ENCODE measurements at regions of chr10 and their contacts with region 1.

Region 1: DNA sequence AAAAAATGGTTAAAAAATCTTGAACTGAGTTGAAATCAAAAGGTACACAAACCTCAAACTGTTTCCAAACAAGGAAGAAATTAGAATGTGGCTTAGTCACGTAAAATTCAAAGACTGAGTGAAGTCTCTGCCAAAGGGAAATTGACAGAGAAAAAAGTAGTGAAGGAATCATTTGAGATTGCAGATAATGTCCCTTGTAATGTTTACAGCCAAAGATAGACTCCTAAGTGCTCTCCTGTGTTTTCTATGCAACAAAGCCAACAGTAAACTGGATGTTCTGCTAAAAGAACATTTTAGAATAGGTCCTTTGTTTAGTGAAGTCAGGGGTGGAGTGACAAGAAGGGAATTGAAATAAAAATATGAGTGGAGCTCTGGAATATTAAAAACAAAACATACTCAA is 117.9 kb downstream of the ITGA8 start:
- DNase-seq: no peak

Region 2: GRCh38 chr10:15670880-15671279 is 69.1 kb after region 1 on chr10:
- intact Hi-C with region 1: loop called in 1 of 2 experiments (anchors 2 kb)
- DNase-seq: no peak

Region 3: GRCh38 chr10:15990523-15991129 is 388.8 kb after region 1 on chr10:
- intact Hi-C with region 1: no loop called
- DNase-seq: no peak